AG04450 (cell line): ENCODE measurements at regions of chr21 and their contacts with region 1.

Region 1: GRCh38 chr21:34603002-34603709 is 11.8 kb downstream of the RCAN1 start:
- DNase-seq: peak; percentile 46
- H3K4me3 ChIP-seq: no peak overlapping the region
- H3K27ac ChIP-seq: no peak overlapping the region
- H3K27me3 ChIP-seq: no peaks in the 10 kb centered on the region
- CTCF ChIP-seq: peak; percentile 84

Region 2: GRCh38 chr21:34235514-34235913 is 367.6 kb before region 1 on chr21:
- CTCF ChIA-PET with region 1: no interaction called
- POLR2A ChIA-PET with region 1: no interaction called
- DNase-seq: no peak
- H3K4me3 ChIP-seq: no peak overlapping the region
- H3K27ac ChIP-seq: no peak overlapping the region
- H3K27me3 ChIP-seq: peaks cover 10% of the 10 kb centered on the region
- CTCF ChIP-seq: no peak

Region 3: GRCh38 chr21:34362136-34362444 is 241.1 kb before region 1 on chr21:
- CTCF ChIA-PET with region 1: interaction called, 23 read pairs
- POLR2A ChIA-PET with region 1: no interaction called
- DNase-seq: no peak
- H3K4me3 ChIP-seq: no peak overlapping the region
- H3K27ac ChIP-seq: no peak overlapping the region
- H3K27me3 ChIP-seq: peaks cover 3% of the 10 kb centered on the region
- CTCF ChIP-seq: no peak

Region 4: DNA sequence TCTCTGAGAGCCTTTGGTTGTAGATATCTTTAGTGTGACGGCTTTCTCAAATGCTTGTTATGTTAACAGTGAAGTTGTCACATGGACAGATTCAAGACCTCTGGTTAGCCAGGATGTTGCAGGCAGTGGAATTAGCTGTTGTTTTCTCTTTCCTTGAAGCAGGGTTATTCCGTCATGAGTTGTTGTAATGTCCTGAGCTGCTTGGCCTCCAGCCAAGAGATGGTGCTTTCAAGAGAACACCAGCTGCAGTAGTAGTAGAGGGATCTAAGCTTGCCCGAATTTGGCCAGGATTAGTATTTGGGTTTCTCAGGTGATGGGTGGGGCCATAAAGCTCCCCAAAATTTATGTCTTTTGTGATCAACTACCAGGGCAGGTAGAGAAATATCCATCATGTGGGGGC is 104.5 kb before region 1 on chr21:
- CTCF ChIA-PET with region 1: interaction called, 18 read pairs
- POLR2A ChIA-PET with region 1: no interaction called
- DNase-seq: no peak
- H3K4me3 ChIP-seq: no peak overlapping the region
- H3K27ac ChIP-seq: no peak overlapping the region
- H3K27me3 ChIP-seq: peaks cover 15% of the 10 kb centered on the region
- CTCF ChIP-seq: no peak

Region 5: GRCh38 chr21:34517491-34518245 is 85.5 kb before region 1 on chr21:
- CTCF ChIA-PET with region 1: interaction called, 18 read pairs
- POLR2A ChIA-PET with region 1: no interaction called
- DNase-seq: no peak
- H3K4me3 ChIP-seq: no peak overlapping the region
- H3K27ac ChIP-seq: no peak overlapping the region
- H3K27me3 ChIP-seq: no peaks in the 10 kb centered on the region
- CTCF ChIP-seq: peak; percentile 26

Region 6: GRCh38 chr21:34592120-34592955 is 10.8 kb before region 1 on chr21:
- CTCF ChIA-PET with region 1: interaction called, 10 read pairs
- POLR2A ChIA-PET with region 1: no interaction called
- DNase-seq: no peak
- H3K4me3 ChIP-seq: no peak overlapping the region
- H3K27ac ChIP-seq: no peak overlapping the region
- H3K27me3 ChIP-seq: no peaks in the 10 kb centered on the region
- CTCF ChIP-seq: no peak

Region 7: GRCh38 chr21:34625030-34625593 is 22.0 kb after region 1 on chr21:
- CTCF ChIA-PET with region 1: interaction called, 17 read pairs
- POLR2A ChIA-PET with region 1: no interaction called
- DNase-seq: no peak
- H3K4me3 ChIP-seq: no peak overlapping the region
- H3K27ac ChIP-seq: no peak overlapping the region
- H3K27me3 ChIP-seq: peaks cover 18% of the 10 kb centered on the region
- CTCF ChIP-seq: no peak